Endothelial cell of umbilical vein (primary cell): ENCODE measurements at regions of chr22 and their contacts with region 1.

Region 1: GRCh38 chr22:50030297-50031188 is 18.0 kb upstream of the IL17REL start:
- DNase-seq: peak; percentile 55
- H3K4me3 ChIP-seq: no peak overlapping the region
- H3K27ac ChIP-seq: no peak overlapping the region
- H3K4me1 ChIP-seq: no peaks in the 10 kb centered on the region
- H3K27me3 ChIP-seq: no peaks in the 10 kb centered on the region
- CTCF ChIP-seq: peak; percentile 86 to 95
- POLR2A ChIP-seq: no peak

Region 2: DNA sequence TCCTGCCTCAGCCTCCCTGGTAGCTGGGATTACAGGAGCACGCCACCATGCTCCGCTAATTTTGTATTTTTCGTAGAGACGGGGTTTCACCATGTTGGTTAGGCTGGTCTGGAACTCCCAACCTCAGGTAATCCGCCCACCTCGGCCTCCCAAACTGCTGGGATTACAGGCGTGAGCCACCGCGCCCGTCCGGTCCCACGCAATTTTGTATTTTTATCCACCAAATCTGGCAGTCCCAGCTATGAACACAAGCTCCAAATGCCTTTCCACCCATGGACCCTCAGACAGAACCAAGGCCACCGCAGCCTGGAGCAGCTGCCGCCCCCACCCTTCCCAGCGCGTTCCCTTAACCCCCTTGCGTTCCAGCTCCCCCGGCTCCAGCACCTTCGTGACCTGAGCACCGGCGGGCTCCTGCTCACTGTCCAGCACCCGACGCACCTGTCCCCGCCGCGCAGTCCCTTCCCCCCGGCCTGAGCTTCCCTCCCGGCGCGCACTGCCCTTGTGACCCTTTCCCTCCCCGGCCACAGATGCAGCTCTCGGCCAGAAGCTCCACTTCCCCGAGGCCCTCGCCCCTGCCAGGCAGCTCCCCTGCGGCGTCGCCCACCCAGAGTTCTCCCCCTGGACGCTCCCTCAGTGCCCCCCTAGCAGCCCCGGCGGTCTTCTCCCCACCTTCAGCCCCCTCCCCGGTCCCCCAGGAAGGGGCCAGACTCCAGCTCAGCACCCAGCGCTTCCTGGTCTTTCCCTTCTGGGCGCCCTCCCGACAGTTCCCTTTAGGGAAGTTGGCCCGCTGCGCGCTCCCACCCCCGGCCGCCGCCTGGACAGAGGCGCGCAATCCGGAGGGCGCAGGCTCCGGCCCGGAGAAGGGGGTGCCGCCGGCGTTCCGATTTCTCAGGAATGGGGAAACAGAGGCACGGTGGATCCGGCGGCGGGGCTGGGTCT is 182.5 kb before region 1 on chr22:
- CTCF ChIA-PET with region 1: no interaction called
- POLR2A ChIA-PET with region 1: no interaction called
- dilution Hi-C with region 1: no loop called
- intact Hi-C with region 1: no loop called
- DNase-seq: no peak
- H3K4me3 ChIP-seq: peak overlapping the region in 1 of 3 experiments; percentile 28
- H3K27ac ChIP-seq: no peak overlapping the region
- H3K4me1 ChIP-seq: peaks cover 5% of the 10 kb centered on the region
- H3K27me3 ChIP-seq: peaks cover 36 to 52% of the 10 kb centered on the region in 2 experiments
- CTCF ChIP-seq: no peak
- POLR2A ChIP-seq: no peak

Region 3: DNA sequence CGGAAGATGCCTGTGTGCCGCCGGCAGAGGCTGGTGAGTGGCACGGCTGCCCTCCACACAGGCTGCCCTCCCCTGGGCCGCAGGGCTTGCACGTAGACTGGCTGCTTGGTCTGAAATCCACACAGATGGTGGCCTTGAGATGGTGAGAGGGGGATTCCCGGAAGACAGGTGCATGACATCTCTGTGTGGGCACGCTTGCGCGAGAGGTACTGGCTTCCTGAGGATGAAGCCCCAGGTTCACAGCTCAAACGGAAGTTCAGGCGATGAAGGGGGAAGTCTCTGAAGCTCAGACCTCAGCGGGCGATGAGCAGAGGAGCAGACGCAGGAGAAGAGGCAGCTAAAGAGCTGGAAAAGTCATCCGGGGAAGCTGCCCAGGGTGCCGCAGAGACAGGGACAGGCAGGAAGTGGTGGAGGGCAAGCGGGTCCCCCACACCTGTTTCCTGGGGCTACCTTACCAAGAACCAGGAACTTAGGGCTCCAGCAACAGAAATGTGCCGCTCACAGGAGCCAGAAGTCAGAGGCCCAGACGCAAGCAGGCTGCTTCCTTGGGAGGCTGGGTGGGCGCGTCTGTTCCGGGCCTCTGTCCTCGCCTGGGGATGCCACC is 104.9 kb before region 1 on chr22:
- CTCF ChIA-PET with region 1: interaction called, 174 read pairs
- POLR2A ChIA-PET with region 1: interaction called, 6 read pairs
- dilution Hi-C with region 1: no loop called
- intact Hi-C with region 1: no loop called
- DNase-seq: no peak
- H3K4me3 ChIP-seq: no peak overlapping the region
- H3K27ac ChIP-seq: no peak overlapping the region
- H3K4me1 ChIP-seq: peaks cover 8% of the 10 kb centered on the region
- H3K27me3 ChIP-seq: no peaks in the 10 kb centered on the region
- CTCF ChIP-seq: no peak
- POLR2A ChIP-seq: no peak

Region 4: GRCh38 chr22:49960159-49961004 is 70.2 kb before region 1 on chr22 and contains the start of gene PIM3:
- CTCF ChIA-PET with region 1: interaction called, 19 read pairs
- POLR2A ChIA-PET with region 1: no interaction called
- dilution Hi-C with region 1: no loop called
- intact Hi-C with region 1: no loop called
- DNase-seq: peak; percentile 97
- H3K4me3 ChIP-seq: peak within 1 kb of the TSS; percentile 52 to 80 (median 59)
- H3K27ac ChIP-seq: peak within 1 kb of the TSS; percentile 80
- H3K4me1 ChIP-seq: peaks cover 25% of the 10 kb centered on the region
- H3K27me3 ChIP-seq: no peaks in the 10 kb centered on the region
- CTCF ChIP-seq: no peak
- POLR2A ChIP-seq: peak; percentile 96
- total RNA-seq, gene PIM3: 185 and 219 TPM in 2 replicates

Region 5: DNA sequence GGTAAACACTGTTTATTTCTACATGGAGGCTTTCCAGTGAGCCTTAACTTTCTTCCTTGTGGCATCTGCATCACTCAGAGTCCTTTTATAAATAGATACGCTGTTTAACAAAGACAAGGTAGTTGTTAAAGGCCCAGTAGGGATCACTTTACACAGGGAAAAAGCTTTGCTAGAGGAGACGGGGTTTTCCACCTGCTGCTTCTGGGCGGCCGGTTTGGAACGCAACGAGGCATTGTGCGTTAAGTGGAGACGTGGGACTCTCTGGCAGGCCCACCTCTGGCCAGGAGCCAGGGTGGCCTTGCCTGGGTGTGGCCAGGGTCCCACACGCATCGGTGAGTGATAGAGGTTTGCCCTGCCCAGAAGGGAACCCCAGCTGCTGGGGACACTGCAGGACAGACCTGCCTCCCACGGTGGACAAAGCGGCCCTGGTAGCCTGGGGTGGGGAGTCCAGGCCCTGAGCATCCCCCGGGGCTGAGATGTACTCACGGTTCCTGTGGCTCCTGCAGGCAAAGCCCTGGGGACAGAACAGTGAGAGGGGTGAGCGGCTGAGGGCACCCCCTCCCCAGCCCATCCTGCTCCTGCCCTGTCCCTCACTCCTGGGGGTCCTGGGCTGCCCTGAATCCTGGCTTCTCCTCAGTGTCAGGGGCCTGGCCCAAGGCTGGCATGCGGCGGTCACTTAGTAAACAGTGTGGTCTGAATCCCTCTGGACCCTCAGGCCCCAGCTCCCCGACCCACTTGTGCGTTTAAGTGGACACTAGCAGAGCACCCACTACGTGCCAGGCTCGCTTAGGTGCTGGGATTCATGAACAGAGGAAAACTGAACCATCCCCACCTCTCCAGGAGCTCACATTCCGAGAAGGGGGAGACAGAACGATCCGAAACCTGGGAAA is 22.1 kb before region 1 on chr22:
- CTCF ChIA-PET with region 1: interaction called, 11 read pairs
- POLR2A ChIA-PET with region 1: no interaction called
- dilution Hi-C with region 1: no loop called
- intact Hi-C with region 1: no loop called
- DNase-seq: no peak
- H3K4me3 ChIP-seq: no peak overlapping the region
- H3K27ac ChIP-seq: no peak overlapping the region
- H3K4me1 ChIP-seq: no peaks in the 10 kb centered on the region
- H3K27me3 ChIP-seq: peaks cover 24 to 26% of the 10 kb centered on the region in 2 experiments
- CTCF ChIP-seq: no peak
- POLR2A ChIP-seq: no peak

Region 6: DNA sequence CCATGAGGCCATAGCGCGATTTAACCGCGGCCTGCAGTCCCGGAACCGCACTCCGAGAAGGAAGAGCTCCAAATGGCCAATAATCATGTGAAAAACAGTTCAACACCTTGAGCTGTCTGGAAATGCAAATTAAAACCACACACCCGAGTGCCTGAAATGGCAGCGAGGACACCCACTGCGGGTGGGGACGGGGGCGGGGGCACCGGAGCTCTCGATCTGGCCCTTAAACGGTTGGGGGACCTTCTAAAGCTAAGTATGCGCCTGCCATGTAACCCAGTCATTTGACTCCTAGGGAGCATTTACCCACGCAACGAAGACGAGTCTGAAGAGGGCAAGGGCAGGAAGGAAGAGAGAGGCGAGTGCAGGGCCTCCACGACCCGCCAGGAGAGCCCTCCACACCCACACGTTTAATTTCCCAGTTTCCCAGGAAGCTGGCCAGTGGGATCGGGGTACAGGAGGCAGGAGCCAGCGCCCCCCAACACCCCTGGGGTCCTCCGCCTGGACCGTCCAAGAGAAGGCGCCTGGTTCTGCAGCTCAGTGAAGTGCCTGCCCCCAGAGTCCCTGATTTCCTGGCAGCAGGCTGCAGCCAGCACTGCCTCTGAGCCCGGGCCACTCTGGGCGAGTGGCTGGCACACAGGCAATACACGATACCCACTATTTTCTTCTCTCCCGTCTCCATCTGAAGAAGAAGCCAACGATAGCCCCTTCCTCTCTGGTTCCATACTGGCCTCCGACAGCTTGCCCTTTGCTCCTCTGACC is 25.9 kb after region 1 on chr22:
- CTCF ChIA-PET with region 1: interaction called, 13 read pairs
- POLR2A ChIA-PET with region 1: no interaction called
- dilution Hi-C with region 1: no loop called
- intact Hi-C with region 1: no loop called
- DNase-seq: no peak
- H3K4me3 ChIP-seq: no peak overlapping the region
- H3K27ac ChIP-seq: no peak overlapping the region
- H3K4me1 ChIP-seq: no peaks in the 10 kb centered on the region
- H3K27me3 ChIP-seq: peaks cover 10 to 19% of the 10 kb centered on the region in 2 experiments
- CTCF ChIP-seq: no peak
- POLR2A ChIP-seq: no peak